Gastrocnemius medialis (tissue), 4 donors: ENCODE measurements at regions of chr1 and their contacts with region 1.

Region 1: DNA sequence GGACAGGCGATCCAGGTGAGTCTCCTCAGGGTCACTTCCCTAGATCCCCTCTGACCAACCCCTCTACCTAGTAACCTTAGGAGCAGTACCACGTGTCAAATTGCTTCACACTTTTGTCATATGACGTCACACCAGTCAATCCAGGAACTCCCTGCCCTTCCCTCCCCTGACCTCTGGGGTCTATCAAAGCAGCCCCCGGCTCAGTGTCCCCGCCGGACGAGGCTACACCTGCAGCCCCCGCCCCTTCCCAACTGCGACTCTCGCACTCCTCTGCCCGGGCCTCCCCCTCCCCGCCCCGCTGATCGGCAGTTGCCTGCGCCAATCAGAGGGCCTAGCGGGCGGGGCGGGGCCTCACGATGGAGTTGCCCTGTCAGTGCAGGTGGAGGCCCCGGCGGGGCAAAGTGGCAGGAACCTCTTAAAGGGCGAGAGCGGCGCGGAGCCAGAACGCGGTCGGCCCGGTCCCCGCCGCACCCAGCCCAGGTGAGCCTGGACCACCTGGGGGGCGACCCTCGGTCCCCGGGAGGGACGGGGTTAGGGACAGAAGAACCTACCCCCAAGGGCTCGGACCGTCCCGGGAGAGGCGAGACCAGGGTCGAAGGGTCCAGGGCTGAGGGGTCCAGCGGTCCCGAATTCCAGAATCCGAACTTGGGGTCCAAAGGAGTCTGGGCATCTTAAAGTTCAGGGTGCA is 27.5 kb upstream of the EPB41 start:
- DNase-seq: peak; percentile 78 to 86
- ATAC-seq: peak; percentile 78 to 82
- H3K4me3 ChIP-seq: peak overlapping the region; percentile 85 to 92 (median 88)
- H3K27ac ChIP-seq: peak overlapping the region; percentile 87 to 93 (median 92)
- H3K4me1 ChIP-seq: peaks cover 19 to 26% of the 10 kb centered on the region in 2 donors
- H3K27me3 ChIP-seq: no peaks in the 10 kb centered on the region
- CTCF ChIP-seq: no peak
- POLR2A ChIP-seq: peak; percentile 63 to 70

Region 2: DNA sequence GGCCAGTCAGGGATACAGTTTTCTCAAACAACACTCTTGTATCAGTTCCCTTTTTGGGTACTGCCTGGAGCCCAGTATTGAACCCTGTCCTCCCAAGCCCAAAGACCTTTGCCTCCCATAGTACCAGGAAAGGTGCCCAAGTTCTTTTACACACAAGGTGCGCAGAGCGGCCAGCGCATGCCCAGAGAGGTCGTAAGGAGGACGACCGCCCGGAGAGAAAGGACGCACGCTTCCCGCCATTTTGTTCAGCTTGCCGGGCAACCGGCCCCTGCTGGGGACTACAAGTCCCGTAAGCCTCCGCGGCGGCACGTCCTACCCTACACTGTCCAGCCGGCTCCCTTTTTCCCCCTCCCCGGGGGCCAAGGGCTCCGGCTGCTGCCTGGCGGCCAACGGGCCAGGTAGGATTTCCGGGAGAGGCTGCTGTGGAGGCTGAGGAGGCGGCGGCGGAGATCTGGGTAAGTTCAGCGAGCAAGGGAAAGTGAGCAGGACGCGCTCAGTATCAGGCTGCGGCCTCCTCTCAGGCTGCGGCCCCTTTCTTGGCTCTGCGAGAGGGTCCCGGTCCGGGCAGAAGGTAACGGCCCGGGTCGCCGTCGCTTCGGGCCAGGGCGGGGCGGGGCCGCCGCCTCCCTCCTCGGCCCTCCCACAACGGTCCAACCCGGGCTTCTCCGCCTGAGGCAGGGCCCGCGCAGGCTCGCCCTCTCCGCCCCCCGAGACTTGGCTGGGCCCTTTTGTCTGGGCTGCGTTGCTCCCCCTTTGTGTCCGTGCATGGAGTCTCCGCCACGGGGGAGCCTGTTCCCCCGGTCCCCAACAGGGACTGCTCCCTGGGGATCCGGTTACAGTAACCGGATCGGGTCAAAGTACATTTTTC is 517.3 kb before region 1 on chr1 and contains the start of gene PHACTR4:
- in situ Hi-C with region 1: loop called in 1 of 4 experiments (anchors 25 kb)
- intact Hi-C with region 1: loop called (anchors 2 kb)
- DNase-seq: peak; percentile 87 to 93
- ATAC-seq: peak; percentile 95 to 97
- H3K4me3 ChIP-seq: peak within 1 kb of the TSS; percentile 75 to 92 (median 86)
- H3K27ac ChIP-seq: peak within 1 kb of the TSS; percentile 88 to 95 (median 93)
- H3K4me1 ChIP-seq: peaks cover 9 to 16% of the 10 kb centered on the region in 2 donors
- H3K27me3 ChIP-seq: no peaks in the 10 kb centered on the region
- CTCF ChIP-seq: no peak
- POLR2A ChIP-seq: peak; percentile 88 to 90
- total RNA-seq, gene PHACTR4: 9.1 to 17.7 (median 13.4) TPM

Region 3: DNA sequence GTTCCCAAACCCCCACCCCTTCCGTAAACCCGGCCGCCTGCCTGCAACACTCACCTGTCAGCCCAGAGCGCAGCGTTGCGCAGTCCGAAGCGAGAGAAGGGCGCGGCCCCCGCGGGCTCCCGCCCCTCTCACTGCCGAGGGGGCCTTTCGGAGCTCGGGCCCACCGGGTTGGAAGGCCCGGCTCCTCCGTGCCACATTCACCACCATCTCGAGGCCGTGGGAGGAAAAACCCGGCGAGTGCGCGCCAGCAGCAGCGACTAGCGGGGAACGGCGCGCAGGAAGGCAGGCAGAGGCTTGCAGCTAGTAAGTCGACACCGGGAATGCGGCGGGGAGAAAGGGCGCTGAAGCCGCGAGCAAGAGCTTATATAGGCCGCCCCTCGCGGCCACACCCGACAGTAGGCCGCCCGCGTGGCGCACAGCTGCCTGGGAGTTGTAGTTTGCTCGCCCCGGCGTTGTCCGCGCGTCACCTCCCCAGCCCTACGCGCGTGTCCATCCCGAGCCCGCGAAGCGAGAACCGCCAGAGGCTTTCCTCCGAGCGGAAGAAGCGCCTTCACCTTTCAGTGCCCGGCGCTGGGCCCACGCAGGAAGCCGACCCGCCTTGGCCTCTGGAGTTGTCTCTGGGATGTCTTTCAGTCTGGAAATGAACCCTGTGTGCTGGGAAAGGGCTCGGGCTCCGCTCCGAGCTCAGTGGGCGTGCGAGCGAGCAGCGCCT is 305.2 kb before region 1 on chr1:
- in situ Hi-C with region 1: no loop called
- intact Hi-C with region 1: loop called (anchors 5 kb)
- DNase-seq: peak; percentile 95
- ATAC-seq: peak; percentile 92 to 96
- H3K4me3 ChIP-seq: peak overlapping the region; percentile 76 to 95 (median 88)
- H3K27ac ChIP-seq: peak overlapping the region; percentile 89 to 94 (median 91)
- H3K4me1 ChIP-seq: peaks cover 23 to 25% of the 10 kb centered on the region in 2 donors
- H3K27me3 ChIP-seq: no peaks in the 10 kb centered on the region
- CTCF ChIP-seq: peak in 4 of 5 experiments; percentile 22 to 42 (median 30)
- POLR2A ChIP-seq: peak; percentile 96 to 99

Region 4: GRCh38 chr1:28914228-28915030 is 27.6 kb after region 1 on chr1 and contains the start of gene EPB41:
- in situ Hi-C with region 1: no loop called
- intact Hi-C with region 1: loop called (anchors 2 kb)
- DNase-seq: peak; percentile 80 to 87
- ATAC-seq: peak; percentile 91 to 96
- H3K4me3 ChIP-seq: peak within 1 kb of the TSS; percentile 58 to 72 (median 60)
- H3K27ac ChIP-seq: peak within 1 kb of the TSS; percentile 80 to 87 (median 84)
- H3K4me1 ChIP-seq: peaks cover 11 to 16% of the 10 kb centered on the region in 2 donors
- H3K27me3 ChIP-seq: no peaks in the 10 kb centered on the region
- CTCF ChIP-seq: peak in 2 of 5 experiments; percentile 11 to 23
- POLR2A ChIP-seq: peak; percentile 42 to 77
- total RNA-seq, gene EPB41: 19.5 to 28.6 (median 23.6) TPM

Region 5: GRCh38 chr1:29033829-29034466 is 147.1 kb after region 1 on chr1:
- in situ Hi-C with region 1: loop called (anchors 5 kb)
- intact Hi-C with region 1: loop called (anchors 1 kb)
- DNase-seq: no peak
- ATAC-seq: peak; percentile 45 to 51
- H3K4me3 ChIP-seq: no peak overlapping the region
- H3K27ac ChIP-seq: no peak overlapping the region
- H3K4me1 ChIP-seq: no peaks in the 10 kb centered on the region
- H3K27me3 ChIP-seq: no peaks in the 10 kb centered on the region
- CTCF ChIP-seq: peak; percentile 64 to 87 (median 76)
- POLR2A ChIP-seq: no peak

Region 6: DNA sequence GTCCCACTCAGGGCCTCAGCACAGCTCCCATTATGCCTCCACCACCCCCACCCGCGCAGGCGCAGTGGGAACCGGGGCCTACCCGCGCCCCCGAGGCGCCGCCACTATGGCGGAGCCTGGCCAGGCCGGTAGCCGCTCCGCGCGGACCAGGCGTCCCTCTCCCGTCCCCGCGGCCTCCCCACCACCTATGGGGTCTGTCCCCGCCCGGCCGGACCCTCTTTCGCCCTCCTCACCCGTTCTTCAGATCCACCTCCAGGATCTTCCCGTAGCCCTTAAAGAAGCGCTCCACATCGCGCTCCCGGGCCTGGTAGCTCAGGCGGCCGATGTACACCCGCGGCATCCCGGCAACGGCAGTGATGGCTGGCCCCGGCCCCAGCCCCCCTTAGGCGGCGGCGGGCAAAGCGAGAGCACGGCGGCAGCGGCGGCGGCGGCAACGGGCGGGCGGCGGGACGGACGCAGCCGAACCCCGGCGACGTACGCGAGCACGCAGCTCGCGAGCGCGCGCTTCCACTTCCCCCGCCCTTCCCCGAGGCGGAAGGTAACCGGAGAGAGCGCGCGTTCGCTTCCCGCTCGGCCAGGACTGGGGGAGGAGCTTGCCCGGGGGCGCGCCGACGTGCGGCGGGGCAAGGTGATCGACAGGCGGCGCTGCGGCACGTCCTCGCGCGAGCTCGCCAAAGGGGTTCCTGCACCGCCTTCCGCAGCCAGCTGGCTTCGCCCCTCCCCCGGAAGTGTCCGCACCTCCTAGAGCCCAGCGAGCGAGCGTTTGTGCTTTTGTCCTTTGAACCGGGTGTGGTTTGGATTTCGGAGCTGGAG is 294.7 kb after region 1 on chr1 and contains the start of gene SRSF4:
- in situ Hi-C with region 1: no loop called
- intact Hi-C with region 1: loop called (anchors 2 kb)
- DNase-seq: peak; percentile 99
- ATAC-seq: peak; percentile 90 to 92
- H3K4me3 ChIP-seq: peak within 1 kb of the TSS; percentile 78 to 98 (median 82)
- H3K27ac ChIP-seq: peak within 1 kb of the TSS; percentile 94 to 100 (median 97)
- H3K4me1 ChIP-seq: peaks cover 40 to 48% of the 10 kb centered on the region in 2 donors
- H3K27me3 ChIP-seq: no peaks in the 10 kb centered on the region
- CTCF ChIP-seq: peak; percentile 57 to 81 (median 74)
- POLR2A ChIP-seq: peak; percentile 95 to 98
- total RNA-seq, gene SRSF4: 42.4 to 72.5 (median 65.4) TPM

Region 7: GRCh38 chr1:30718636-30719405 is 1831.9 kb after region 1 on chr1:
- in situ Hi-C with region 1: loop called in 1 of 4 experiments (anchors 25 kb)
- intact Hi-C with region 1: loop called (anchors 10 kb)
- DNase-seq: peak; percentile 71 to 94
- ATAC-seq: peak; percentile 79 to 81
- H3K4me3 ChIP-seq: peak overlapping the region; percentile 60 to 85 (median 73)
- H3K27ac ChIP-seq: peak overlapping the region; percentile 97 to 98 (median 98)
- H3K4me1 ChIP-seq: peaks cover 0 to 3% of the 10 kb centered on the region in 2 donors
- H3K27me3 ChIP-seq: no peaks in the 10 kb centered on the region
- CTCF ChIP-seq: peak; percentile 98 to 100 (median 99)
- POLR2A ChIP-seq: peak; percentile 80 to 85